ENCODE measurements at regions of chr18 and their contacts with region 1.

Region 1: DNA sequence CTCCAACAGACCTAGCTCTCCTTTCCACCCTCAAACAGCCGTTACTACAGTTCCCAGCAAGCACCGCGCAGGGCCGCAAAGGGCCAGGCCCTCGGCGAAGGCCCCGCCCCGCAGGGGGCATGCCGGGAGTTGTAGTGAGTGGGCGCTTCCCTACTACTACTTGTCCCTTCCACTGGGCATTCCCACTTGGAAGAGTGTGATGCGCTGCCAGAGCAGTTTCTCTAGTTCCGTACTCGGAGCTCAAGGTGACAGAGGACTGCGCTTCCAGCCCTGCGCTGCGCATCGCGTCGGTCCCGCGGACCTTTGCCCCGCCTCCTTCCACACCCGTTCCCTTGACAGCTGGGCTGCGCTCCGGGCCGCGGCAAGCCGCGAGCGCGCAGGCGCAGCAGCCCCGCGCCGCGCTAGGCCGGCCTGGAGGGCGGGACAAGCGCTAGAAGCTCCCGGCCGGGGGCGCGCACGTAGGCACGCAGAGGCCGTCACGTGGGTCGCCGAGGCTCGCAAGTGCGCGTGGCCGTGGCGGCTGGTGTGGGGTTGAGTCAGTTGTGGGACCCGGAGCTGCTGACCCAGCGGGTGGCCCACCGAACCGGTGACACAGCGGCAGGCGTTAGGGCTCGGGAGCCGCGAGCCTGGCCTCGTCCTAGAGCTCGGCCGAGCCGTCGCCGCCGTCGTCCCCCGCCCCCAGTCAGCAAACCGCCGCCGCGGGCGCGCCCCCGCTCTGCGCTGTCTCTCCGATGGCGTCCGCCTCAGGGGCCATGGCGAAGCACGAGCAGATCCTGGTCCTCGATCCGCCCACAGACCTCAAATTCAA is at the start of gene VAPA:
- DNase-seq: peak; percentile 99
- H3K4me3 ChIP-seq: peak within 1 kb of the TSS; percentile 78 to 99 (median 89)
- H3K27ac ChIP-seq: peak within 1 kb of the TSS; percentile 94
- H3K4me1 ChIP-seq: peaks cover 38% of the 10 kb centered on the region
- H3K27me3 ChIP-seq: peaks cover 0 to 1% of the 10 kb centered on the region in 2 experiments
- CTCF ChIP-seq: no peak
- POLR2A ChIP-seq: peak; percentile 77
- total RNA-seq, gene VAPA: 163 TPM in 2 replicates

Region 2: DNA sequence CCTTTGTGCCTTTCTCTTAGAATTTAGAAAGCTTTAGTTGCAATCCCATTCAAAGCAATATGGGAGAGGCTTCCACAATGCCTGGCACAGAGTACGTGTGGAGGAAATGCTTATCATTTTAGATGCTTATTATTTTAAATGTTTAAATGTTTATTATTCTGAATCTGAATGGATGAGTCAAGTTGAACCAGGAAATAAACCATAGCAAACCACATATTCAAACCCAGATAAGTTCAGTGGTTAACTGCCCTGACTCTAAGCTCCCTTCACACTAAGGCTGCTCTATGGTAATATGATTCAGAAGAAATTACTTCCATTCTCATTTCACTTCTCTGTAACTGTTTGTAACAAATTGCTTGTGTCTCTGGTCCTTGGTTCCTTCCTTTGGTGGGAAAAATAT is 294.2 kb before region 1 on chr18:
- CTCF ChIA-PET with region 1: no interaction called
- POLR2A ChIA-PET with region 1: no interaction called
- dilution Hi-C with region 1: no loop called
- intact Hi-C with region 1: no loop called
- DNase-seq: peak; percentile 86
- H3K4me3 ChIP-seq: peak overlapping the region in 1 of 3 experiments; percentile 30
- H3K27ac ChIP-seq: peak overlapping the region; percentile 93
- H3K4me1 ChIP-seq: peaks cover 40% of the 10 kb centered on the region
- H3K27me3 ChIP-seq: no peaks in the 10 kb centered on the region
- CTCF ChIP-seq: no peak
- POLR2A ChIP-seq: no peak

Region 3: GRCh38 chr18:9661564-9661963 is 252.2 kb before region 1 on chr18:
- CTCF ChIA-PET with region 1: no interaction called
- POLR2A ChIA-PET with region 1: no interaction called
- dilution Hi-C with region 1: no loop called
- intact Hi-C with region 1: no loop called
- DNase-seq: no peak
- H3K4me3 ChIP-seq: no peak overlapping the region
- H3K27ac ChIP-seq: no peak overlapping the region
- H3K4me1 ChIP-seq: no peaks in the 10 kb centered on the region
- H3K27me3 ChIP-seq: no peaks in the 10 kb centered on the region
- CTCF ChIP-seq: peak in 1 of 2 donors; percentile 9
- POLR2A ChIP-seq: no peak

Region 4: GRCh38 chr18:9708057-9708433 is 205.7 kb before region 1 on chr18 and contains the start of gene RAB31:
- CTCF ChIA-PET with region 1: no interaction called
- POLR2A ChIA-PET with region 1: no interaction called
- dilution Hi-C with region 1: no loop called
- intact Hi-C with region 1: loop called (anchors 1 kb)
- DNase-seq: peak; percentile 67
- H3K4me3 ChIP-seq: peak within 1 kb of the TSS; percentile 79 to 98 (median 91)
- H3K27ac ChIP-seq: peak within 1 kb of the TSS; percentile 70
- H3K4me1 ChIP-seq: peaks cover 23% of the 10 kb centered on the region
- H3K27me3 ChIP-seq: no peaks in the 10 kb centered on the region
- CTCF ChIP-seq: no peak
- POLR2A ChIP-seq: peak; percentile 52
- total RNA-seq, gene RAB31: 27.9 and 30.5 TPM in 2 replicates

Region 5: DNA sequence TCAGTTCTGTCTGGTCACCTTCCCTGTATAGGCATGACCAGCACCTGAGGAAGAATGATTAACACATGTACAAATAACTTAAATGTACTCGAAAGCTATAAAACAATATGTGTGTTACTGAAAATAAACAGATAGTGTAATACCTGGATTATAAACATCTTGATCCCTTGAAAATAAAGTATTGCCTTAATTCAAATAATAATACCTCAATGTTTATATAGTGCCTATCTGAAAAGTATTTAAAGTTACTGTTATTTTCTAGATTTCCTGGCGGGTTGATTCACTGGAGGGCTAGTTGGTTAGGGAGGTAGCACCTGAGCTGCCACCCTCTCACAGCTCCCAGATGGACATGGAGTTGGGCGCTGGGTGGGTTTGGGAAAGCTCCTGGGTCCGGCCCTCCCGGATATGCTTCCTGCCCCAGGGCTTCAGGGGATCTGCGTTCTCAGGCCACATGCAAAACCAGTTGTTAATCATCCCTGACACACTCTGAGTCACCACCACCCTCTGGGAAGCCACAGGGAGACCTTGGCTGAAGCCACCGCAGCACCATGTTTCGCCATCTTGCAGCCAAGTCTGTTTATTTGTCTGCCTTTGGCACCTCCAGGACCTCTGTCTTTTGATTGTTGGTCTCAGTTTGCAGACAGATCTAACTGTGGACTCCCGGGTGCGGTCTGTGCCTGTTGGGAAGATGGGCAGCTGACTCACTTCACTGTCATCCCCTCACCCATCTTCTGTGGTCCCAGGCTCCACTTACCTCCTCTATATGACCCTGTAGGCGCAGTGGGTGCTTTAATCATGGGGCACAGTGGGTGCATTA is 170.3 kb before region 1 on chr18:
- CTCF ChIA-PET with region 1: no interaction called
- POLR2A ChIA-PET with region 1: no interaction called
- dilution Hi-C with region 1: no loop called
- intact Hi-C with region 1: loop called (anchors 1 kb)
- DNase-seq: peak; percentile 87
- H3K4me3 ChIP-seq: no peak overlapping the region
- H3K27ac ChIP-seq: peak overlapping the region; percentile 83
- H3K4me1 ChIP-seq: peaks cover 37% of the 10 kb centered on the region
- H3K27me3 ChIP-seq: no peaks in the 10 kb centered on the region
- CTCF ChIP-seq: no peak
- POLR2A ChIP-seq: no peak

Region 6: DNA sequence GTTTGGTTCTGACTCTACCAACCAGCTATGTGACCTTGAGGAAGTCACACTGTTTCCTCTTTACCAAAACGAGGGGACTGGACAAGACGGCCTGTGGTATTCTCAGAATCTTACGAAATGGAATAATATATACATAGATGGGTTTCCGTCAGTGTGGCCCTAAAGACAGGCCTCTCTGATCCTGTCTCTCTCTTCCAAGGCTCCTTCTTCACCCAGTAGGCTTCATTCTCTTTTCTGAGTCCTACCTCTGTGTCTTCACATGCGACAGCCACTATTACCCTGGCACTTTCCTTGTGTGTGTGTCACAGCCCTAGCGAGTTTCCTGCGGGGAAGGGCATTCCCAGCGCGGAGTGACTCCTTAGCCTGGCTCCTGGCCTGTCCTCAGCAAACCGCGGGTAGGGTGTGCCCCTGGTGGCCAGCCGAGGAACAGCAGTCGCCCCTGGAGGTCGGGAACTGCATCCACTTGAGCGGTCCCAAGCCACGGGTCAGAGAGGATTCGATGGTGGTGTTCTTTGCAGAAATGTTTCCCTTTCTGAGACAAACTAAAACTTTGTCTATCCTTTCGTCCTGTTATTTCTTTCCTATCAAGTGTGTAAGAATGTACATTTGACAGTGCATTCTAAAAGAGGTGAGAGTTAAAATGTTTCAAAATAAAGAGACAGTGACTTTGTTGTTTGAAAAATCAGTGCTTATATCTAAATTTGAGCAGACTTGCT is 142.3 kb before region 1 on chr18:
- CTCF ChIA-PET with region 1: no interaction called
- POLR2A ChIA-PET with region 1: no interaction called
- dilution Hi-C with region 1: no loop called
- intact Hi-C with region 1: loop called (anchors 2 kb)
- DNase-seq: peak; percentile 81
- H3K4me3 ChIP-seq: no peak overlapping the region
- H3K27ac ChIP-seq: peak overlapping the region; percentile 14
- H3K4me1 ChIP-seq: peaks cover 4% of the 10 kb centered on the region
- H3K27me3 ChIP-seq: no peaks in the 10 kb centered on the region
- CTCF ChIP-seq: peak; percentile 97 to 99
- POLR2A ChIP-seq: no peak

Region 7: DNA sequence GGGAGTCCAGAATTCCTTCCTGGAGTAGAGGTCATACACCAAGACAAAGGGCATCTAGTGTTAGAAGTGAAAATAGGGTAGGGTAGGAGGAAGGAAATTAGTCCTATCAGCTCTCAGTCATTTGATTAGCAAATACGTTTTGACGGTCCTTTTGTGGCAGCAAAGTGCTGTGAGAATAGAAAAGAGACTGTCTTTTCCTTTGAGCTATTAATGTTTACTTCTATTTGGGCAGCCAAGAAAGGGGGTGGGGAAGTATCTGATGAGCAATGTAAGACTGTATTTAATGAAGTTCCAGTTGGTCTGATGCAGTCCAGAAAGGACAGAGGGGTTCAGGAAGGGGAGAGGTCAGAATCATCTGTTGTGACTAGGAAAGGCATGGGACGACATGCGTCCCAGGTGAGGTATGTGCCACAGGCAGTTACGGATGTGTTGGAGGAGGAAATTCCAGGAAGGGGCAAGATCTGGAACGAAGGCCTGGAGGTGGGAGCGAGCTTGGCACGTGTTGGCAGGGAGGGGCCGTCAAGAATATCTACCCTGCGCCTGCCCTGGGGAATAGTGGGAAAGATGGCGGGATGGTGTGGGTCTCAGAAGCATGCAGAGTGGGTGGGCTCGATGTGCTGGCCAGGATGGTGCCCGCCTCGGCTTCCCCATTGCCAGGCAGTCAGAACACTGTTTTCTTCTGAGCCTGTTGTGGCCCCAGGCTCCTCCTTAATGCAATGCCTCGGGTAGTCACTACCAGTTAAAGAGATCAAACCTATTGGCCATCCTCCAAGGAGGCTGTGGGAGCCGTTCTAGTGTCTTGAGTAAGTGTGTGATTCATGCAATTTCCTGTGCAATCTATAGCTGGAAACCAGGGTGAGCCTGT is 85.9 kb before region 1 on chr18:
- CTCF ChIA-PET with region 1: interaction called, 4 read pairs
- POLR2A ChIA-PET with region 1: no interaction called
- dilution Hi-C with region 1: no loop called
- intact Hi-C with region 1: loop called (anchors 1 kb)
- DNase-seq: peak; percentile 95
- H3K4me3 ChIP-seq: no peak overlapping the region
- H3K27ac ChIP-seq: peak overlapping the region; percentile 66
- H3K4me1 ChIP-seq: peaks cover 34% of the 10 kb centered on the region
- H3K27me3 ChIP-seq: no peaks in the 10 kb centered on the region
- CTCF ChIP-seq: no peak
- POLR2A ChIP-seq: peak; percentile 59

Region 8: GRCh38 chr18:9876867-9877654 is 36.7 kb before region 1 on chr18:
- CTCF ChIA-PET with region 1: interaction called, 7 read pairs
- POLR2A ChIA-PET with region 1: no interaction called
- dilution Hi-C with region 1: no loop called
- intact Hi-C with region 1: loop called (anchors 1 kb)
- DNase-seq: peak; percentile 89
- H3K4me3 ChIP-seq: peak overlapping the region; percentile 8 to 34 (median 19)
- H3K27ac ChIP-seq: peak overlapping the region; percentile 89
- H3K4me1 ChIP-seq: peaks cover 27% of the 10 kb centered on the region
- H3K27me3 ChIP-seq: no peaks in the 10 kb centered on the region
- CTCF ChIP-seq: no peak
- POLR2A ChIP-seq: peak; percentile 82

Region 9: DNA sequence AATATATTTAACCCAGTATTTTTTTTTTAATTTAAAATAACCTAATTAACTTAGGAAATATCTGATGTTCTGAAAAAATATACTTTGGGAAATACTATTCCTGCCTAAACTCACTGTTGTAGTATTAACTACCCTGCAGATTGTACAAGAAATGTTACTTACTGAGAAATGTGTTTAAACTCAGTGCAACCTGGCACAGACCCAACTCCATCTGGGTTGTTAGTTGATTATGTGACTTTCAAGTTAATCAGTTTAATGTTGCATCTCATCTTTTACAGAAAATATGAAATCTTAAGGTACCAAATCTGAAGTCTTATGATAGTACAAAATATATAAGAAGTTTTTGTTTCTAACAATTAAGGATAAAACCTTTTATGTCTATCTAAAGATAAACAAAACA is 27.4 kb after region 1 on chr18:
- CTCF ChIA-PET with region 1: no interaction called
- POLR2A ChIA-PET with region 1: no interaction called
- dilution Hi-C with region 1: no loop called
- intact Hi-C with region 1: no loop called
- DNase-seq: no peak
- H3K4me3 ChIP-seq: no peak overlapping the region
- H3K27ac ChIP-seq: no peak overlapping the region
- H3K4me1 ChIP-seq: no peaks in the 10 kb centered on the region
- H3K27me3 ChIP-seq: no peaks in the 10 kb centered on the region
- CTCF ChIP-seq: no peak
- POLR2A ChIP-seq: no peak

Region 10: GRCh38 chr18:9951022-9951859 is 37.5 kb after region 1 on chr18:
- CTCF ChIA-PET with region 1: interaction called, 7 read pairs
- POLR2A ChIA-PET with region 1: no interaction called
- dilution Hi-C with region 1: no loop called
- intact Hi-C with region 1: loop called (anchors 2 kb)
- DNase-seq: peak; percentile 75
- H3K4me3 ChIP-seq: no peak overlapping the region
- H3K27ac ChIP-seq: no peak overlapping the region
- H3K4me1 ChIP-seq: no peaks in the 10 kb centered on the region
- H3K27me3 ChIP-seq: no peaks in the 10 kb centered on the region
- CTCF ChIP-seq: peak; percentile 63 to 68
- POLR2A ChIP-seq: no peak